Ascending aorta (tissue), 2 donors: ENCODE measurements at regions of chr11 and their contacts with region 1.

Region 1: GRCh38 chr11:33970984-33971466 is 79.1 kb upstream of the LMO2 start:
- DNase-seq: peak in 1 of 2 donors; percentile 69
- H3K4me3 ChIP-seq: no peak overlapping the region
- H3K27ac ChIP-seq: no peak overlapping the region
- H3K4me1 ChIP-seq: no peaks in the 10 kb centered on the region
- H3K27me3 ChIP-seq: no peaks in the 10 kb centered on the region
- CTCF ChIP-seq: peak; percentile 54 to 74 (median 72)

Region 2: GRCh38 chr11:33633241-33633901 is 337.7 kb before region 1 on chr11:
- intact Hi-C with region 1: no loop called
- DNase-seq: no peak
- H3K4me3 ChIP-seq: no peak overlapping the region
- H3K27ac ChIP-seq: no peak overlapping the region
- H3K4me1 ChIP-seq: no peaks in the 10 kb centered on the region
- H3K27me3 ChIP-seq: no peaks in the 10 kb centered on the region
- CTCF ChIP-seq: no peak

Region 3: DNA sequence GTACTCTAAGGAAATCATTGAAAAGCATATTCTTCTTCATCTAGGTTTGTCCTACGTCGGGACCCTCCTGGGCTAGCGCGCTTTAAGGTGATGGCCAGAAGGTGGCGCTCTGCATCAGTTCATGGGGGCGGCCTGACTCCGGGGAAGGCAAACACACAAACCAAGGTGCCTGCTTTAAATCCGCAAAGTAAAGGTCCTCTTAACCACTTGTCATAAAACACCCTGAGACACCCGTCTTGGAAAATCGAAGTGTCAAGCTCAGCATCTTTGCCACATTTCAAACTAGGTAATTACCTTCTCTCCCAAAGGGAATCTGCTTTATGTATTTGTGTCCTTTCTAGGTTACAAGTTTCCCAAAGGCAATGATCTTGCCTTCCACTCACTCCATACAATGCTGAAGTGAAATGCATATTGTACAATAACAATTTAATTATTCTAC is 113.1 kb before region 1 on chr11:
- intact Hi-C with region 1: loop called (anchors 1 kb)
- DNase-seq: peak in 1 of 2 donors; percentile 84
- H3K4me3 ChIP-seq: no peak overlapping the region
- H3K27ac ChIP-seq: no peak overlapping the region
- H3K4me1 ChIP-seq: no peaks in the 10 kb centered on the region
- H3K27me3 ChIP-seq: no peaks in the 10 kb centered on the region
- CTCF ChIP-seq: peak; percentile 79 to 95 (median 91)

Region 4: GRCh38 chr11:34105079-34105956 is 134.3 kb after region 1 on chr11 and contains the start of gene NAT10:
- intact Hi-C with region 1: no loop called
- DNase-seq: peak; percentile 93 to 99
- H3K4me3 ChIP-seq: peak within 1 kb of the TSS; percentile 82 to 86
- H3K27ac ChIP-seq: peak within 1 kb of the TSS; percentile 93 to 95
- H3K4me1 ChIP-seq: peaks cover 4 to 5% of the 10 kb centered on the region in 2 donors
- H3K27me3 ChIP-seq: no peaks in the 10 kb centered on the region
- CTCF ChIP-seq: no peak
- total RNA-seq, gene NAT10: 11.3 TPM